Right ventricle myocardium superior (tissue), 1 donor: ENCODE measurements at regions of chr3 and their contacts with region 1.

Region 1: DNA sequence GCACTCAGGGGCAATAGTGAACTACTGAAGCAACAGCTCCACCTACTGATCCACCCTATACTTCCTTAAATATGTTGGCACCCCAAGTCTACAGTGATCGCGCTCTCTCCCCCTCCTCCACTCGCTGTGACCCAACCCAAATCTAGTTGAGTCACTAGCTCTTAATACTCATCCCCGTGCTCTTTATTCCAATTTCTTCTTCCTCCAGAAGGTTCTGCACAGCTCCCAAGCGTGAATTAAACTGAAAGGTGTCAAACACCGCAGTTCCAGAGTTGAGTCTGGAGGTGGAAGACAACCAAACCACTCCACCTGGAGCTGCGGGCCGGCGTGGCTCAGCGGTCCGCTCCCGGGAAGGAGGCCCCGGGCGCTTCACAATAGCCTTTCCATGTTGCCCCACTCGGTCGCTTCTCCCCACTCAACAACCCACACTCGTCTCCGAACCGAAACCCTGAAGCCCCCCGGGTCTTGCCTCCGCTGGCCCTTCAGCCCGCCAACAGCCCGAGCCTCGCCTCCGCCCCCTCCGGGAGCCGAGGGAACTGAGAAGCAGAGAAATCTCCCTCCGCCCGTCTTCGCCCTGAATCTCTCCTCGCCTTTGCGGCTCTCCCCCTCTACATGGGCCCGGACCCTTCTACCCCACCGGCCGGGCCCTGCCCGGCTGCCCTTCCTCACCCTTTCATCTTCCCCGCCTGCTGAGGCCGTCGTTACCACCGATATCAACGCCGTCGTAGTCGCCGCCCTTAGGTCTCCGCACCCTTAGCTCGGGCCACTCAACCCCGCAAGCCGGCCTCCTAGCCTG is 578 bp downstream of the NAA50 start:
- DNase-seq: peak; percentile 54
- ATAC-seq: peak; percentile 70

Region 2: GRCh38 chr3:113514265-113514769 is 231.2 kb before region 1 on chr3:
- intact Hi-C with region 1: loop called (anchors 10 kb)
- DNase-seq: no peak
- ATAC-seq: peak; percentile 20

Region 3: DNA sequence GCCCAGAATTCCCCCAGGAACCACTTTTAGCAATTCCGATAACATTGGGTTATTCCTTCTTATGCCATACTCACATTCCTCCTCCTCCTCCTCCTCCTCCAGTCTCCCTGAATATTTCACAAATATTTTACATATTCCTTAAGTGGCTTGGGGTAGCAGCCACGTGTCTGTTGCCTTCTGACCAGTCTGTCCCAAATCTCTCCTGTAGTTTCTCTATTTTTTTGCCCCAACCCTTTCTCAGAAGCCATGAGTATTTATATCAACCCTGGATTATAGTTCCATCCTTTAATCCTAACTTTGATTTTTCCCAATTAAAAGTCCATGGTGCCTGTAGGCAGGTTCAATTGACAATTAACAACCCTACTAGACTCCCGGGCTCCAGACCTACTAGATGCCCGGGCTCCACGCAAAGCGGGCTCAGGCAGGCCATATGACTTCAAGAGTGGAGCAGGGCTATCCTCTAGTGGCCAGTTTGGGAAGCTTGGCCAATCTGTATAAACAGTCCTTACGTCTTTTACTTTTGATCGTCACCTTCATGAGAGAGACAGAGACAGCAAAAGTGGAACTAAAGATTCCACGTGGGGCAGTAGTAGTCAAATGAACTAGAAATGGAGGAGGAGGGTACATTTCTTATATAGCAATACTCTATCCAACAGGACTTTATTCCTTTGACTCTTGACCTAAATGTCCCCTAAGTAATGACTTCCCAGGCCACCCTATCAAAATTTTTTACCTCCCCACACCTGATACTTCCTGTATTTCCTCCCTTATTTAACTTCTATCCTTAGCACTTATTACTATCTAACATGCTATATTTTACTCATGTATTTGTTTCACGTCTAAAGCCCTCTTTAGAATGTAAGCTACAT is 118.7 kb before region 1 on chr3:
- intact Hi-C with region 1: loop called (anchors 10 kb)
- DNase-seq: peak; percentile 62
- ATAC-seq: peak; percentile 96

Region 4: GRCh38 chr3:113898751-113899291 is 153.3 kb after region 1 on chr3:
- intact Hi-C with region 1: no loop called
- DNase-seq: no peak
- ATAC-seq: no peak